Activated CD4-positive, alpha-beta T cell treated with anti-CD3 and anti-CD28 coated beads for 36 hours (primary cell): ENCODE measurements at regions of chr1 and their contacts with region 1.

Region 1: DNA sequence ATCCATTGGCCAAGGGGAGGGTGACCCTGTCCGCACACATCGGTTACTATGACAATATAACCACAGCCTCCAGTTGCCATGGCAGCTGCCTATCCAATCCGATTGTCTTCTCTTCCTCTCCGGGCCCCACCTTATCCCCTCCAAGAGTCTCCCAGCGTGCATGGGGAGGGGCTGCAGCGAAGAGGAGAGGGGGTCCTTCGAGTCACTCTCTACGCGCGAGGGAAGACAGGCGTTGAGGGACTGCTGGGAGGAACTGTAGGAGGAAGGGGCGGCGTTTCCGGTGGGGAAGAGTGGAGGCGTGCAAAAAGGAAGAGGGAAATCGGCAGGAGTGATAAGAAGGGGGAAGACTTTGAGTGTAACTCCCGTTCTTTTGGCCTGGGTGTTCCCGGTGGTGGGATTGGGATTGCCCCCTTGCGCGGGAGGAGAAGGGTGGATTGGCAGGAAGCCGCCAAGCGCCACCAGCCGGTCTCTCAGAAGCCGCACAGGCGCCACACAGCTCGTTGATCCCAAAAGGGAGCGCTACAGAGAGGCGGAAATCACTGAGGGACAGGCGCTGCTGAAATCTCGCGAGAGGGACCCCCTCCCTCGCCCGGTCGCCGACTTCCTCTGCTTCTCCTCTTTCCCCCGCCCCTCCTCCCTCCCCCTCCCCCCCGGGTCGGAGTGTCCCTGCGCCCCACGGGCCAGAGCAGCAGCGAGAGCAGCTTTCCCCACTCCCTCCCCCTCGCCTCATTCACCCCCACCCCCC is 384 bp upstream of the SMG7 start:
- DNase-seq: peak; percentile 99
- ATAC-seq: peak; percentile 61
- H3K4me3 Mint-ChIP-seq: peak overlapping the region; percentile 86
- H3K27ac Mint-ChIP-seq: peak overlapping the region; percentile 99
- H3K4me1 Mint-ChIP-seq: peaks cover 26% of the 10 kb centered on the region
- H3K27me3 Mint-ChIP-seq: no peaks in the 10 kb centered on the region

Region 2: DNA sequence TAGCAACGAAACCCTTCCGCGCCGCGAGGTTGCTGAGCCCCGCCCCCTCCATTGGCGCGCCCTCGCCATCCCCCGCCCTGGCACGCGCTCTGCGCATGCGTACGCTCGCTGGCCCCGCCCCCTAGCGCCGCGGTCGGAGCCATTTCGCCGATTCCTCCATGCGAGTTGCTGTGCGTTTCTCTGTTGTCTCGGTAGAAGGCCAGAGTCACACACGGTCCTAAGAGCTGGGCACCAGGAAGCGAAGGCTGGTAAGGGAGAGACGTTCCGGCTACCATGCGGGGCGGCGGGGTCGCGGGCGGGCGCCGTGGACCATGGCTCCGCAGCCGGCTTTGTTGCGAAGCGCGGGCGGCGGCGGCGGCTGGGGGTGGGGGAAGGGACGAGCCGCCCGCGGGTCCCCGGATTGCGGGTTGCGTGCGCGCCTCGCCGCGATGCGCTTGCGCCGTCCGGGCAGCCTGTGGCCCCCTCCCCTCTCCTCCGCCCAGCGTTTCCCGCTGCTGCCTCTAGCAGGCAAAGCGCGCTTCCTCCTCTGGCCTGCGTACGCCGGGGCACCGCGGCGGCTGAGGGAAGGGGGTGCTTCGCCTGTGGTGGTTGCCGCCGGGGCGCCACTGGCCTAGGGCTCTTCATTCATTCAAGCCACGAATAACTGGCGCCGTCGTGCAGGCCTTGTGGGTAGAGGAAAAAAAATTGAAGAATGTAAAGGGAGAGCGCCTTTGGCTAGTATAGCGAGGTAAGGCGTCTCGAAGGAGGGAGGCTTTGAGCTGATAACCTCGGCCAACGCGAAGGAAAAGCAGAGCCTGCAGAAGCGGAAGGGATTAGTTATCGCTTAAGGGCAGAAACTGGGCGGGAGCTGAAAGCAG is 632.5 kb before region 1 on chr1 and contains the start of gene DHX9:
- CTCF ChIA-PET with region 1: no interaction called
- POLR2A ChIA-PET with region 1: no interaction called
- intact Hi-C with region 1: loop called in 1 of 2 experiments (anchors 2 kb)
- DNase-seq: peak; percentile 97
- ATAC-seq: peak; percentile 89
- H3K4me3 Mint-ChIP-seq: peak within 1 kb of the TSS; percentile 92
- H3K27ac Mint-ChIP-seq: peak within 1 kb of the TSS; percentile 99
- H3K4me1 Mint-ChIP-seq: peaks cover 36% of the 10 kb centered on the region
- H3K27me3 Mint-ChIP-seq: no peaks in the 10 kb centered on the region
- total RNA-seq, gene DHX9: 244 to 255 TPM

Region 3: DNA sequence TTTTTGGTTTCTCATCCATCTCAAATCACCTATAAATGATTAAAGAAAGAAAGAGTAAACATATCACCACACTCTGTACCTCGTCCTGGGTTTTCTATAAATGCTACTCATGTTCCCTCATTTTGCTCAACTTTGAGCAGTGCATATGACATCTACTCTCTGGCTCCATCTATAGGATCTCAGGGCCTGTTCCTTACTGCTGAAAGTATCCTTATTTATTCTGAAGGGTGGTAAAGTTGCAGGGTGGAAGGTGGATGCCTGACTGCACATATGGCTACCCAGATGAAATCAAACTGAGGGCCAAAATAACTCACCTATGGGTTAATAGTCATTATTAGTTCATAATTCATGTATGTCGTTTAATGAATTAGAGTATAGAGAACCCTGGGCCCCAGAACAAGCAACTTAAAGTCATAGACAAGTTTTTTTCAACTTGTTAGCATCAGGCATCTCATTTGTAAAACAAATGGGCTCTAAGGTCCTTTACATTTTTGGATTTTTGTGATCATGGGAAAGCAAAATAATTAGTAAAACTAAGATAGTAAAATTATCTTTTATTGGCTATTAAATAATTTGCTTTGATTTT is 71.8 kb after region 1 on chr1:
- CTCF ChIA-PET with region 1: no interaction called
- POLR2A ChIA-PET with region 1: no interaction called
- intact Hi-C with region 1: loop called (anchors 1 to 2 kb)
- DNase-seq: no peak
- ATAC-seq: peak; percentile 91
- H3K4me3 Mint-ChIP-seq: no peak overlapping the region
- H3K27ac Mint-ChIP-seq: peak overlapping the region; percentile 63
- H3K4me1 Mint-ChIP-seq: peaks cover 2% of the 10 kb centered on the region
- H3K27me3 Mint-ChIP-seq: no peaks in the 10 kb centered on the region

Region 4: GRCh38 chr1:183915625-183916510 is 444.0 kb after region 1 on chr1:
- CTCF ChIA-PET with region 1: no interaction called
- POLR2A ChIA-PET with region 1: no interaction called
- intact Hi-C with region 1: loop called (anchors 5 to 10 kb)
- DNase-seq: peak; percentile 82
- ATAC-seq: peak; percentile 99
- H3K4me3 Mint-ChIP-seq: no peak overlapping the region
- H3K27ac Mint-ChIP-seq: no peak overlapping the region
- H3K4me1 Mint-ChIP-seq: peaks cover 19% of the 10 kb centered on the region
- H3K27me3 Mint-ChIP-seq: no peaks in the 10 kb centered on the region

Region 5: GRCh38 chr1:184386312-184387068 is 914.6 kb after region 1 on chr1 and contains the start of gene C1orf21:
- CTCF ChIA-PET with region 1: no interaction called
- POLR2A ChIA-PET with region 1: no interaction called
- intact Hi-C with region 1: loop called in 1 of 2 experiments (anchors 5 kb)
- DNase-seq: peak; percentile 89
- ATAC-seq: peak; percentile 95
- H3K4me3 Mint-ChIP-seq: peak within 1 kb of the TSS; percentile 66
- H3K27ac Mint-ChIP-seq: peak within 1 kb of the TSS; percentile 38
- H3K4me1 Mint-ChIP-seq: peaks cover 12% of the 10 kb centered on the region
- H3K27me3 Mint-ChIP-seq: peaks cover 44% of the 10 kb centered on the region
- total RNA-seq, gene C1orf21: 2.6 to 6.1 TPM

Region 6: DNA sequence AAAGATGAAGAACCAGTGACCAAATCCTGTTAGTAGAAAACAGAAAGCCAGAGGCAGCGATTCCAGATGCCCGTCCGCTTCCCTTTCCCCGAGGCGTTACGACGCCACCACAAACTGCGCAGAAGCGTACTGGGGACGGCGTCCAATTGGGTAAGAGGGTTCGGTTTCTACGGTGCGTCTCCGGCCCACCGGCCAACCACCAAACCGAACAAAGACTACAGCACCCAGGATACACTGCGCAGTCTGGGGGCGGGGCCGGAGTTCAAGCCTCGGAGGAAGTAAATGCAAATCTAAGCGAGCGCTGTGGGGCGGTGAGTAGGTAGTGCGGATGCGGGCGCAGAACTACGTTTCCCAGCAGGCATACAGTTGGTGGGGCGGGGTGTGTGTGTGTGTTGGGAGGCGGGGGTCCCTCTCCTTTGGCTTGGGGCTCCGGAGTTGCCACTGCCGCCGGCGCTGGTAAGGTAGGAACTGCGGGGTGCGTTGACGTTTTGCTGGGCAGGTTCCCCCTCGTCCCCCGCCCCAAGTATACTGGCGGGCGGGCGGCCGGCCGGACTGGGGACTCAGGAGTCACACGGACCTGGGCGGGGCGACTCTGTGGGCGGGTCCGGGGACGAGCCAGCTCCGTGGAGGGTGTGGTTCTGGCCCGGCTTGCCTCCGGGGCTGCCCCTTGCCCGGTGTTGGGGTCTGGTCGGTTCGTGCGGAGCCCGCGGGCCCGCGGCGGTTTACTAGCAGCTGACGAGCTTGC is 1685.1 kb after region 1 on chr1 and contains the starts of genes SWT1 and TRMT1L:
- CTCF ChIA-PET with region 1: no interaction called
- POLR2A ChIA-PET with region 1: no interaction called
- intact Hi-C with region 1: loop called in 1 of 2 experiments (anchors 5 kb)
- DNase-seq: peak; percentile 99
- ATAC-seq: peak; percentile 94
- H3K4me3 Mint-ChIP-seq: peak within 1 kb of the TSS; percentile 91
- H3K27ac Mint-ChIP-seq: peak within 1 kb of the TSS; percentile 95
- H3K4me1 Mint-ChIP-seq: peaks cover 50% of the 10 kb centered on the region
- H3K27me3 Mint-ChIP-seq: no peaks in the 10 kb centered on the region
- total RNA-seq, gene SWT1: 3.0 to 3.3 TPM
- total RNA-seq, gene TRMT1L: 33.7 to 38.7 TPM